ENCODE measurements at regions of chr19 and their contacts with region 1.

Region 1: GRCh38 chr19:1605236-1606137 is at the start of gene UQCR11:
- DNase-seq: peak; percentile 86 to 92
- H3K4me3 ChIP-seq: peak within 1 kb of the TSS; percentile 92
- H3K27ac ChIP-seq: peak within 1 kb of the TSS; percentile 73
- H3K4me1 ChIP-seq: peaks cover 26% of the 10 kb centered on the region
- H3K27me3 ChIP-seq: no peaks in the 10 kb centered on the region
- CTCF ChIP-seq: peak; percentile 57; the same call in 1 of the 2 replicates
- total RNA-seq, gene UQCR11: 196 and 275 TPM in 2 replicates

Region 2: GRCh38 chr19:1767464-1767933 is 162.0 kb after region 1 on chr19:
- CTCF ChIA-PET with region 1: no interaction called
- POLR2A ChIA-PET with region 1: no interaction called
- intact Hi-C with region 1: loop called (anchors 10 kb)
- DNase-seq: peak in 1 of 2 experiments; percentile 49
- H3K4me3 ChIP-seq: no peak overlapping the region
- H3K27ac ChIP-seq: no peak overlapping the region
- H3K4me1 ChIP-seq: no peaks in the 10 kb centered on the region
- H3K27me3 ChIP-seq: no peaks in the 10 kb centered on the region
- CTCF ChIP-seq: peak; percentile 91